GM10248 (cell line): ENCODE measurements at regions of chr17 and their contacts with region 1.

Region 1: DNA sequence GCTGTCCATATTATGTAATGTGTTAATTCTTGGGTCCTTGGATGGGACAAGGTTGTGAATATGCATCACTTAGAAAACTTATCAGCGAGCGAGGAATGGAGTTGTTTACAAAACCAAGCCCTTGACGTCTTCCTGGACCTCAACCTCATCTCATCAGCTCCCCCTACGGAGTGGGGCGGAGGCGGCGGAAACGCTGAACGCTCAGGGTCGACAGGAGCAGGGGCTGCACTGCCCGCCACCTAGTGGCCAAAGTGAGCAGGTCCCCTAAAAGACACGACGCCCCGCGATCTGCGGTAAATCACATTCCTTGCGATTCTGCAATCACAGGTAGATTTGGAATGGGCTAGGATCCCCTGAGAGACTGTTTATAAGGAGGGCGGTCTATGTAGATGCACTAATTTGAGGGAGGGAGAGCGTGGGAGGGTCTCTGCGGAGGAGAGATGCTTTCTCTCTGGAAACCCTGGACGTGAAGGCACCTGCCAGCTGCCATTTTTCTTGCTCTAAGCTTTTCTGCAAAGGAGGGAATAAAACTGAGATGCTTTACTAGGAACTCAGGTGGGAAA is 5.4 kb upstream of the ICAM2 start:
- DNase-seq: peak; percentile 80
- CTCF ChIP-seq: peak; percentile 98

Region 2: GRCh38 chr17:63714547-63715277 is 311.1 kb before region 1 on chr17:
- CTCF ChIA-PET with region 1: no interaction called
- POLR2A ChIA-PET with region 1: no interaction called
- DNase-seq: no peak
- CTCF ChIP-seq: no peak

Region 3: GRCh38 chr17:63925645-63926044 is 100.2 kb before region 1 on chr17:
- CTCF ChIA-PET with region 1: interaction called, 160 read pairs
- POLR2A ChIA-PET with region 1: no interaction called
- DNase-seq: no peak
- CTCF ChIP-seq: no peak

Region 4: GRCh38 chr17:63966646-63967264 is 59.1 kb before region 1 on chr17:
- CTCF ChIA-PET with region 1: interaction called, 19 read pairs
- POLR2A ChIA-PET with region 1: no interaction called
- DNase-seq: peak; percentile 53
- CTCF ChIP-seq: no peak

Region 5: DNA sequence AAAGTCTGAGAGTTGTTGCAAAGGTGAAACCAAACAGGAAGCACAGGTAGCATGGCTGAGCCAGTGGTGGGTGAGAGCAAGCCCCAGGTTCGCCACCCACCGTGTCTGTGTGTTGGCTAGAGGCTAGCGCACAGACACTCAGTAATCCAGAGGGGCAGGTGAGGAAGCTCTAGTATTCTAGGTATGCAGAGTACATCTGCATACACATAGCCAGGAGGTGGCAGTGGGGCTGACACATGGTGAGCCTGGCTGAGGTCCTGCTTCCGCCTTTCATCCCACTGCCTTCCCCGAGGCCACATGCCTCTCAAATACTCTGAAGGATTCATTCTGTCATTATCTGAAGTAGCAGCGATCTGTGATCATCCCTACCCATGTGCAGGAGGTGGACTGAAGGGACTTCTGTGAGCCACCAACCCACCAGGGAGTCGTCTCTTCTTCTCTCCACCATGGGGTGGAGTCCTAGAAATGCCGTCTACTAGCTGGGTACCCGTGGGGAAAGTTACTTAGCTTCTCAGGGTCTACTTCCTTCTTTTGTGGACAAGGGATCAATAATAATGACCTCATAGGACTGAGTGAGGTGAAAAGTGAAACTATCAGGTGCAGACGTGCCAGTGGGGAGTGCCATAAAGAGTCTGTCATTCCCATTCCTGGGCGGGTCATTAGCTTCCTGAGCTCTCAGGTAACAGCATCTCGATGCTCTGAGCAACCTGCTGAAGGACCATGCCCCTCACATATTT is 30.6 kb after region 1 on chr17:
- CTCF ChIA-PET with region 1: interaction called, 39 read pairs
- POLR2A ChIA-PET with region 1: no interaction called
- DNase-seq: peak; percentile 84
- CTCF ChIP-seq: peak; percentile 20

Region 6: DNA sequence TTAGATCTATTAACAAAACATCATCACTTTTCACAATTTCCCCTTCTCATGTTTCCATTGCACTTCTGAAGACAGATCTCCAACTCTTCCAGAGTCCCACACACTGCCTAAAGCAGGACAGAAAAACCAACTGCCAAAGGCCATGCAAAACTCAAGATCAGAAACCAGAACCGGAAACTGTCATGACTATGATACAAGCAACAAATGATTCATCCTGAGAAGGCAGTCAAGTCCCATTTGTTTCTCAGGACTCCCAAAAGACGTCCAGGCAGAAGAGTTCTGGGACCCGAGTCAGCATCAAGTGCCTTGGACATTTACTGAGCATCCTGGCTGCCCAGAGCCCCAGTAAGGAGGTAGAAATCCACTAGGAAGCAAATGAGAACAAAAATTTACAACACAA is 65.3 kb after region 1 on chr17:
- CTCF ChIA-PET with region 1: interaction called, 14 read pairs
- POLR2A ChIA-PET with region 1: no interaction called
- DNase-seq: peak; percentile 55
- CTCF ChIP-seq: no peak

Region 7: DNA sequence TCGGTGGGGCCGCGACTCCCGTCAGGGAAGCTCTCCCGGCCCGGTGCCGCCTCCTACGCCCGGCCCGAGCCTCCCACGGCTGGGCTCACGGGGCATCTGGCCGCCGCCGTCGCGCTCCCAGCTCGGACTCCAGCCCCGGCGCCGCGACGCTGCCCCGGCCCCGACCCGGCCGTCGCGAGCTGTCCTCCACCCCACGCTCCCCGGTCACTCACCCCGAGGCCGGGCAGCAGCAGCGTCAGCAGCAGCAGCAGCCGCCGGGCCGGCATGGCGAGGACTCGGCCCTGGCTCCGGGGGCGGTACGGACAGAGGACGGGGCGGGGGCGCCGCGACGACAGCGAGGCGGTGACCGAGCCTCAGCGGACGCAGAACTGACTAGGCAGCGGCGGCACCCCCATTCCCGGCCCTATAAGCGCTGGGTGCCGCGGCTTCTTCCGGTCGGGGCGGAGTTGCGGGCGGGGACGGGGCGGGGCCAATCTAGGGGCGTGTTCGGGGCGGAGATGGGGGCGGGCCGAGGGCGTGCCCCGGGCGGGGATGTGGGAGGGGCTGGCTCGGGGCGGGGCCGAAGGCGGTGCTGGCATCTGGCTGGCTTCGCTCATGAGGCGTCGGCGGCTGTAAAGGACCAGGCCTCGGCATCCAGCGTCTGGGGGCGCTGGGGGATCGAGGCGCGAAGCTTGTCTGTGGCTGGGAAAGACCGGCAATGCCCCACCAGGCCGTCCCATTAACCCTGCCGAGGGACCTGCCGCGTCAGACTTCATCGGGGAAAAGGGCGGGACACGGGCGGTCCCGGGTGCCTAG is 104.1 kb after region 1 on chr17 and contains the start of gene ERN1:
- CTCF ChIA-PET with region 1: interaction called, 515 read pairs
- POLR2A ChIA-PET with region 1: interaction called, 9 read pairs
- DNase-seq: peak; percentile 94
- CTCF ChIP-seq: no peak

Region 8: GRCh38 chr17:64183815-64184214 is 158.0 kb after region 1 on chr17:
- CTCF ChIA-PET with region 1: no interaction called
- POLR2A ChIA-PET with region 1: no interaction called
- DNase-seq: no peak
- CTCF ChIP-seq: no peak

Region 9: DNA sequence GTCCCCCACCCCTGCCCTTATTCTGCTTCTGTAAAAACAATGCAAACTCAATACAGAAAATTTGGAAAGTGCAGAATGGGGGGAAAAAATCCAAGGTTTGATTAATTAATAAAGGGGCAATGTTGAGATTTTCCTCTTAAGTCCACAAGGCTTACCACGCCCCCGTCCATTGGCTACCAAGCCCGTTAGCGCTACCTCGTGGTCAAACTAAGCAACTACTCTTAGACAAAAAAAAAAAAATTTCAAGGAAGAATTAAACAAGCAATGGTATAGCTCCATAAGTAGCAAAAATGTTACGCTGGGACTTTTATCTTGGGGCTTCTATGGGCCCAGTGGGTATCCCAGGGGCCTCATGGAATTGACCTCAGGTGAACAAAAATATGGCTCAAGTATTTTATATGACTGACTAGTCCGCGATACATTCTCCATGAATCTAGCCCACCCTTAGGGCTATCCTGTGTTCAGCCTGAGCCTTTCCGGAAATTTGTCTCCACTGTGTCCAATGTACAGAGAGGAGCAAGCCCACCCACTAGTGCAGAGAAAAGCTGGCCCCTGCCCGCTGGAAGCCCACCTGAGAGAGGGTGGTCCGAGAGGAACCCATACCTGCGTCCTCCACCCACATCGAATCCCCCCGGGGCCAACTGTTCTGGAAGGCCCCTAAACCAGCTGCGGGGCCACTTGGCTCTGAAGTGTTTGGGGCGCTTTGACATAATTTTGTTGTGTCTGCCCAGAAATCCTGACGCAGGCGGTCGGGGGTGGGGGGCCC is 256.3 kb after region 1 on chr17:
- CTCF ChIA-PET with region 1: interaction called, 13 read pairs
- POLR2A ChIA-PET with region 1: no interaction called
- DNase-seq: peak; percentile 72
- CTCF ChIP-seq: peak; percentile 75

Region 10: GRCh38 chr17:64331946-64332493 is 306.2 kb after region 1 on chr17:
- CTCF ChIA-PET with region 1: no interaction called
- POLR2A ChIA-PET with region 1: no interaction called
- DNase-seq: no peak
- CTCF ChIP-seq: no peak